AG04449 (cell line): ENCODE measurements at regions of chr11 and their contacts with region 1.

Region 1: GRCh38 chr11:13238879-13239514 is 38.6 kb upstream of the BMAL1 start:
- DNase-seq: no peak
- H3K4me3 ChIP-seq: no peak overlapping the region
- CTCF ChIP-seq: peak; percentile 67

Region 2: GRCh38 chr11:13189561-13190426 is 49.2 kb before region 1 on chr11:
- CTCF ChIA-PET with region 1: interaction called, 10 read pairs
- POLR2A ChIA-PET with region 1: no interaction called
- DNase-seq: no peak
- H3K4me3 ChIP-seq: no peak overlapping the region
- CTCF ChIP-seq: no peak

Region 3: GRCh38 chr11:13222285-13222684 is 16.7 kb before region 1 on chr11:
- CTCF ChIA-PET with region 1: interaction called, 191 read pairs
- POLR2A ChIA-PET with region 1: no interaction called
- DNase-seq: no peak
- H3K4me3 ChIP-seq: no peak overlapping the region
- CTCF ChIP-seq: no peak

Region 4: DNA sequence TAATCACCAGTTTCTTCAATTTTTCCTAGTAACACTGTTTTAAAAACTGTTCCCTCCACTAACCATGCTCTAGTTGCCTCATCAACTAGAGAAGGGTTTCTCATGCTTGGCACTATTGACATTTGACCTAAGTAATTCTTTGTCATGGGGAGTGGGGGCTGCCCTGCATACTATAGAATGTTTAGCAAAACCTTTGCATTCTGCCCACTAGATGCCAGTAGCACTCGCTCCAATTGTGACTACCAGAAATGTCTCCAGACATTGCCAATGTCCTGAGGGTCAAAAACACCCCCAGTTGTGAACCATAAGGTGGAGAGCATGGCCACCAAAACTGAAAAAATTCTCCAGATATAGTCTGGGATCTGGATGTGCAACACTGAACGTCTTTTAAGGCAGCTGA is 11.0 kb after region 1 on chr11:
- CTCF ChIA-PET with region 1: interaction called, 108 read pairs
- POLR2A ChIA-PET with region 1: no interaction called
- DNase-seq: no peak
- H3K4me3 ChIP-seq: no peak overlapping the region
- CTCF ChIP-seq: peak; percentile 27

Region 5: DNA sequence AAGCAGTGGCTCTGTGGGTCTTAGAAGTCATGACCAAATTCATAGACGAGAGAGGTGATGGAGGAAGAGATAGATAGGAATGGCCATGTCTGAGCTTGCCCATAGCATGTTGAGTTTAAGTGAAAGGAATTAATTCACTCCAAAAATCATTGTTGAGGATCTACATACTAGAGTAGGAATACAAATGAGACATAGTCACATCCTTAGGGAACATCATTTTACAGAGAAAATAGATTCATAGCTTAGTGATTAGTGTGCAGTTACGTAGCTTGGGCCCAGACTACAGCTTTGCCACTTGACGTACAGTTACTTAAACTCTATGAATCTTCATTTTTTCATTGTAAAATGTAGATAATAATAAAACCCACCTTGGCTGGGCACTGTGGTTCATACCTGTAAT is 17.2 kb after region 1 on chr11:
- CTCF ChIA-PET with region 1: interaction called, 108 read pairs
- POLR2A ChIA-PET with region 1: no interaction called
- DNase-seq: no peak
- H3K4me3 ChIP-seq: no peak overlapping the region
- CTCF ChIP-seq: no peak

Region 6: DNA sequence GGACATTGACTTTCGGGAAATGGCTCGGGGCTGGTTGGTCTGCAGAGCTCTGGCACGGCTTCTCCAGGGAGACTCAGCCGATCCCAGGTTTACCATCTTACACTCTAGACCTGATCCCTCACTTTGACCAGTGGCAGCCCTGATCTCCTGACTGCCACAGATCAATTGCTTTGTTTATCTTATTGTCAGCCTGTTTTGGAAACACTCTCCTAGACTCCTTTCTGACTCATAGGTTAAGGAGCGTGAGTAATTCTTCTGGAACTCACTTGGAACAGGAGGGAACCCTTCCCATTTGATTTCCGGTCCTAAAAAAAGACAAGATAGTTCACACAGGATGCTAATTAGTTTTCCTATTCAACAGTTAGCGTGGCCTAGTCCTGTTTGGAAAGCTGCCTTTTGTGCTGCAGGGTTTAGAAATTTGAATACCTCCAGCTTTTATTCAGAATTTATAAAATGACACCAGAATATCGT is 22.6 kb after region 1 on chr11:
- CTCF ChIA-PET with region 1: interaction called, 19 read pairs
- POLR2A ChIA-PET with region 1: no interaction called
- DNase-seq: peak; percentile 55
- H3K4me3 ChIP-seq: no peak overlapping the region
- CTCF ChIP-seq: no peak

Region 7: GRCh38 chr11:13271060-13271693 is 32.2 kb after region 1 on chr11:
- CTCF ChIA-PET with region 1: interaction called, 10 read pairs
- POLR2A ChIA-PET with region 1: no interaction called
- DNase-seq: no peak
- H3K4me3 ChIP-seq: no peak overlapping the region
- CTCF ChIP-seq: no peak